Psoas muscle (tissue), 8 donors: ENCODE measurements at regions of chr9 and their contacts with region 1.

Region 1: DNA sequence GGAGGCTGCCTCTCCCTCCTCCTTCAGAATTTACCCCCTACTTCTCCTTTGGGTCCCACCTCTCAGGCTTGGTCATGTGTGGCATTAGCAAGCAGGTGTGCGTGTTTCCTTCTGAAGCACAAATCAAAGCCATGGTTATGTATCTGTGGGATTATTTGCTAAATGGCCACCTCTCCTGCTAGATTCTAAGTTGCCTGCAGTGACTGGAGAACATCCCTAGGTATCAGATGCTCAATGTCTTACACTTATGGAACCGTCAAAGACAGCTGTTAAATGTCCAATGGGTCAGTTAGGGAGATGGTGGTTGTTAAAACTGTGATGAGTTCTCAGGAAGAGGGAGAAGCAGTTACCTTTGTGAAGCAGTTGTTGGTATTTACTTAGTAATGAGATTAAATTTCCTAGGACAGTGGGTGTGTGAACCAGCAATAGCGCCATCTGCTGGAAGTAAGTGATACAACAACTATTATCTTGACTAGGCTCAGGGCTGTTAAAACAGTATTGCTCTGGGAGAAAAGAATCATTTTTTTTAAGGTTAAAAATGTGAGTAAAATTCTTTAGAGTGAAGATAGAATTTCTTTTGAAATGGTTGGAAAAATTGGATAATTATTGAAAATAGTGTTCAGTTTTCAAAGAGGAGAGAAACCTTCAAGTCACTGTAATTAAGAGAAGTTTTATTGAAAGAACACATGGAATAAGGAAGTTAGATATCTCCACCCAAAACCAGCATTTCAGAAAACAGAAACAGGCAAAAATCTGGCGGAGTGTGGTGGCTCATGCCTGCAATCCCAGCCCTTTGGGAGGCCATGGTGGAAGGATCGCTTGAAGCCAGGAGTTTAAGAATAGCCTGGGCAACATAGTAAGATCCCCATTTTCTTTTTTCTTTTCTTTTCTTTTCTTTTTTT is 71.3 kb downstream of the TMC1 start:
- DNase-seq: no peak
- ATAC-seq: peak; percentile 82 to 96 (median 88)
- H3K4me3 ChIP-seq: no peak overlapping the region
- H3K27ac ChIP-seq: no peak overlapping the region
- H3K4me1 ChIP-seq: peaks cover 5% of the 10 kb centered on the region
- H3K27me3 ChIP-seq: no peaks in the 10 kb centered on the region
- CTCF ChIP-seq: peak; percentile 92

Region 2: DNA sequence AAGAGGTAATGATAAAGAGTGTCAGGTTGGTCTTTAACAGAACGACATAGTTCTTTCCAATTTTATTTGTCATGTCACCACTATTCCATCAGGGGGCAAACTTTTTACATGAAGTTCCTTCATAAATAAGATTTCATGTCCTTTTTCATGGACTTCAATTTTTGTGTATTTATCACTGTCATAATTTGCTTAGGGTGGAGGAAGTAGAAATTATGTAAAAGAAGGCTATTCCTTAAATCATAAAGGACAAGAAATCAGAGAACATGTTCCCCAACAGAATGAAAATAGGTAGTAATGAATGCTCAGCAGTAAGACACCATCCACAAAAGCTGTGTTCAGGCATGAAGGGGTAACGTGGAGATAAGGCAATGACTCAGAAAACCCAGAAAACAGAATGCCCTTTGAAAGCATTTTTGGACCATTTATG is 300.5 kb before region 1 on chr9:
- intact Hi-C with region 1: loop called (anchors 2 to 5 kb)
- DNase-seq: no peak
- ATAC-seq: peak; percentile 43 to 80 (median 56)
- H3K4me3 ChIP-seq: no peak overlapping the region
- H3K27ac ChIP-seq: peak overlapping the region; percentile 31
- H3K4me1 ChIP-seq: peaks cover 9% of the 10 kb centered on the region
- H3K27me3 ChIP-seq: no peaks in the 10 kb centered on the region
- CTCF ChIP-seq: peak; percentile 67

Region 3: DNA sequence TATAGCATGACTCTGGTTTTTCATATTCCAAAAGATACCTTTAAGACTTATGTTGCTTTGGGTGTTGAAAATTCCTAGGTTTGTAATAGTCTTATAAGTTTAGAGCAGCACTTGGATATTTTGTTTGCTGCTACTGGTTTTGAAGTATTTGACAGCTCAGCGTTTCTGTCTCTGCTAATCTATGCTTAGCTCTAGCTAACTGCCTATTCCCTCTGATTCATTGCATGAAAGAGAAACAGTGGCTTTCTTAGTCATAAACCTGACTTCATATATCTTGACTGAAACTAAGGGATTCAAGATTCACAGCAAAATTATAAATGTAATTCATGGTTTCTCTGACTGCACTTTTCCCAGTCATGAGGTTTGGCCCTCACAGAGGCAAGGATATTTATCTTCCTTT is 523.3 kb after region 1 on chr9:
- intact Hi-C with region 1: no loop called
- DNase-seq: no peak
- ATAC-seq: no peak
- H3K4me3 ChIP-seq: no peak overlapping the region
- H3K27ac ChIP-seq: no peak overlapping the region
- H3K4me1 ChIP-seq: no peaks in the 10 kb centered on the region
- H3K27me3 ChIP-seq: no peaks in the 10 kb centered on the region
- CTCF ChIP-seq: no peak